ENCODE measurements at regions of chr1 and their contacts with region 1.

Region 1: GRCh38 chr1:1059494-1060280 is 14.4 kb downstream of the RNF223 start:
- DNase-seq: peak; percentile 61 to 68
- ATAC-seq: peak; percentile 54 to 72
- H3K4me3 ChIP-seq: peak overlapping the region; percentile 74
- H3K27ac ChIP-seq: peak overlapping the region; percentile 79 to 97; a peak in 5 of 6 replicates
- H3K4me1 ChIP-seq: peaks cover 41% of the 10 kb centered on the region
- CTCF ChIP-seq: no peak; the same call in 1 of the 3 replicates
- EP300 ChIP-seq: no peak
- POLR2A ChIP-seq: no peak
- RAD21 ChIP-seq: no peak

Region 2: DNA sequence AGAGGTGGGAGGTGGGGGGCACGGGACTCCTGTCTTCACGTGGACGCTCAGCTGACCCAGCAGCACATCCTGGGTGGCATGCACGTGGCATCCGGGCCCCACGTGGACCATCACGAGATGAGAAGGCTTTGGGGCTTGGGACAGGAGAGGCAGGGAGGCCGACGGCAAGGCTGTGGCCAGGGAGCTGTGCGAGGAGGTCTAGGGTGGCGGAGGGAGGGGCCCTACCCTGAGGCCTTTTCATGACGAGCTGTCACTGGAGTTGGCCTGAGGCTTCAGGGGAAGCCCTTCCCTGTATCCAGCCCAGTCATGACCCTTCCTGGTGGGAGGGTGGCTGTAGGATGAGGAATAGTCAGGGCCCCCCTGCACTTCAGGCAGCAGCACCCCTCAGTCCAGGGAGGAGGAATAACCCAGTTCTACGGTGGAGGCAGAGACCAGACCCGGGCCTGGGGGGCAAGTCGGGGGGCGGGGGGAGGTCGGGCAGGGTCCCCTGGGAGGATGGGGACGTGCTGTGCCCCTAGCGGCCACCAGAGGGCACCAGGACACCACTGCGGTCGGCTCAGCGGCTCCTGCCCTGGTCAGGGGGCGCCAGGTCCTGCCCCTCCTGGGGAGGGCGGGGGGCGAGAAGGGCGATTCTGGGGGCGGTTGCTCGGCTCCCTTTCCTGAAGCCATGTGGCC is 75.8 kb before region 1 on chr1:
- CTCF ChIA-PET with region 1: interaction called, 126 read pairs
- POLR2A ChIA-PET with region 1: no interaction called
- DNase-seq: no peak
- ATAC-seq: peak; percentile 64 to 79; a peak in 5 of 6 replicates
- H3K4me3 ChIP-seq: 0 out of 3 replicates have a peak overlapping the region, but pooled peaks have one; percentile 12
- H3K27ac ChIP-seq: peak overlapping the region in 1 of 2 experiments; percentile 68; a peak in 3 of 6 replicates
- H3K4me1 ChIP-seq: no peaks in the 10 kb centered on the region
- CTCF ChIP-seq: peak; percentile 78
- EP300 ChIP-seq: no peak
- POLR2A ChIP-seq: no peak
- RAD21 ChIP-seq: peak; percentile 74 to 92

Region 3: DNA sequence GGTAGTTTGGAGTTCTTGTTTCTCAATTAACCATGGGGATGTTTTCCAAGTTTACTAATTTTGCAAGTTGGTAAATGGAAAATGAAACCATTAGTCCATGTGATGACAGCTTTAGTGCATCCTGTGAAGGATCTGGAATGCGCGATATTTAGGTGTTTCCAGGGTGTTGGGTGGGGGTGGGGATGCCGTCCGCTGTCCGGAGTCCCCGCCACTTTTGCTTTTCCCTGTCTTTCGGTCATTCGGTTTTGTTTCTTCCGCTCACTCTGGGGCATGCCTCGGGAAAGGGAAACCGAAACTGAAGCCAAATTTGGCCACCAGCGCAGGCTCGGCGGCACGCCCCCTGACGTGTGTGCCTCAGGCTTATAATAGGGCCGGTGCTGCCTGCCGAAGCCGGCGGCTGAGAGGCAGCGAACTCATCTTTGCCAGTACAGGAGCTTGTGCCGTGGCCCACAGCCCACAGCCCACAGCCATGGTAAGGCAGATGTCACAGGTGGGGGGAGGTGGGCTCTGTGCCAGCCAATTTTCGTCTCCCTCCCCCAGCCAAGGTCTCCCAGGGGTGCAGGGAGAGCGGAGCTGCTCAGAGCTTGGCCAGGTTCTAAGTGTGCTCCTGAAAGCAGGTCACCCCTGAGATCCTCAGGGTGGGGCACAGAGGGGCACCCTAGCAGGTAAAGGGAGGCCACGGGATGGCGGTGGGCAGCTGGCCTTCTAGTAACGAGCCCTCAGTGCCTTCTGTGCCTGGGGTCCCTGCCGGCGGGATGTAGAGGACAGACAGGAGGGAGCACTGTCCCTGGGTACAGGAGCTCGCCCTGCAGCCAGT is 46.4 kb before region 1 on chr1 and contains the start of gene ISG15:
- CTCF ChIA-PET with region 1: interaction called, 92 read pairs
- POLR2A ChIA-PET with region 1: no interaction called
- DNase-seq: peak in 1 of 2 experiments; percentile 61
- ATAC-seq: peak; percentile 89
- H3K4me3 ChIP-seq: peak within 1 kb of the TSS; percentile 60
- H3K27ac ChIP-seq: peak within 1 kb of the TSS; percentile 77 to 81
- H3K4me1 ChIP-seq: peaks cover 5% of the 10 kb centered on the region; the same call in 1 of the 3 replicates
- CTCF ChIP-seq: no peak
- EP300 ChIP-seq: no peak
- POLR2A ChIP-seq: no peak
- RAD21 ChIP-seq: no peak
- polyA plus RNA-seq, gene ISG15: 4.3 and 4.6 TPM in 2 replicates

Region 4: DNA sequence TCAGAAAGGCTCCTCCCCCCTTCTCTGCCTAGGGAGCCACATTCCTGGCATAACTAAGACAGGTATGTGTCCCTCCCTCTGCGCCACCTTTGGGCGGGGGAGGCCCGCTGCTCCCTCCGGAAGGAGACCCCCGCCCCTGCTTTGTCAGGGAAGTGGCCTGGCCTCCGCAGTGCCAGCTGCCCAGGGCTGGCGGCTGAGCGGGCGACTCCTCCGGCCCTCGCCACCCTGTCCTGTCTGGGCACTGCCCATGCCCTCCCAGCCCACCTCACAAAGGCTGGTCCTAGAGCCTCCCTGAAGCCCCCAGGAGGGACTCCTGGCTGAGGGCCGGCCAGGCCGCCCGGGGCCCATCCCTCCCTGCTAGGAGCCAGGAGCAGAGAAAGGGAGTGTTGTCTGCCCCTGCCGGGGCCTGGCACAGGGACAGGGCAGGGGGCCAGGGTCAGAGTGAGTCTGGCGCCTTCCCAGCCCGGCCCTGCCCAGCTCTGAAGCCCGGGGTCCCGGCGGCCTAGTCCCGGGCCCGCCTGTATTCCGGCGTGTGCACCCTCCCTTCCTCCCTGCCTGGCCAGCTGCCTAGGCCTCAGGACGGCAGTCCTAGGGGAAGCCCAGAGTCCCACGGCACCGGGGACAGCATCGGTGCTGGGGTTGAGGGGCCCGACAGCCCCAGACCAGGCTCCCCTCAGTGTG is 34.8 kb before region 1 on chr1:
- CTCF ChIA-PET with region 1: interaction called, 92 read pairs
- POLR2A ChIA-PET with region 1: interaction called, 8 read pairs
- DNase-seq: peak in 1 of 2 experiments; percentile 65
- ATAC-seq: peak; percentile 9 to 39; a peak in 3 of 6 replicates
- H3K4me3 ChIP-seq: peak overlapping the region; percentile 36; the same call in 2 of the 3 replicates
- H3K27ac ChIP-seq: peak overlapping the region; percentile 86 to 98
- H3K4me1 ChIP-seq: peaks cover 50% of the 10 kb centered on the region
- CTCF ChIP-seq: no peak
- EP300 ChIP-seq: no peak
- POLR2A ChIP-seq: no peak
- RAD21 ChIP-seq: no peak

Region 5: DNA sequence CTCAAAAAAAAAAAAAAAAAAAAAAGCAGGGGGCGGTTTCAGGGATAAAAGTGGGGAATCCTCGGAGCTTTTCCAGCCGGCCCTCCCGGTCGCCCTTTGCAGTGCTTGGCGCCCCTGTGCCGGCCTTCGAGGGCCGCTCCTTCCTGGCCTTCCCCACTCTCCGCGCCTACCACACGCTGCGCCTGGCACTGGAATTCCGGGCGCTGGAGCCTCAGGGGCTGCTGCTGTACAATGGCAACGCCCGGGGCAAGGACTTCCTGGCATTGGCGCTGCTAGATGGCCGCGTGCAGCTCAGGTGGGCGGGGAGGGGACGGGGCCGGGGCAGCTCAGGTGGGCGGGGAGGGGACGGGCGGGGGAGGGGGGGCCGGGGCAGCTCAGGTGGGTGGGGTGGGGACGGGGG is 10.9 kb before region 1 on chr1:
- CTCF ChIA-PET with region 1: interaction called, 11 read pairs
- POLR2A ChIA-PET with region 1: no interaction called
- DNase-seq: no peak
- ATAC-seq: no peak
- H3K4me3 ChIP-seq: no peak overlapping the region
- H3K27ac ChIP-seq: no peak overlapping the region
- H3K4me1 ChIP-seq: no peaks in the 10 kb centered on the region
- CTCF ChIP-seq: no peak
- EP300 ChIP-seq: no peak
- POLR2A ChIP-seq: no peak
- RAD21 ChIP-seq: no peak